SK-N-SH (cell line): ENCODE measurements at regions of chr5 and their contacts with region 1.

Region 1: GRCh38 chr5:169302491-169303118 is 1.7 kb upstream of the SLIT3 start:
- DNase-seq: peak; percentile 69
- H3K4me3 ChIP-seq: peak overlapping the region in 1 of 2 experiments; percentile 18; a peak in 1 of 4 replicates
- H3K27ac ChIP-seq: peak overlapping the region; percentile 46 to 80; a peak in 2 of 4 replicates
- H3K4me1 ChIP-seq: peaks cover 10 to 31% of the 10 kb centered on the region in 2 experiments; a peak in 2 of 4 replicates
- H3K27me3 ChIP-seq: no peaks in the 10 kb centered on the region
- CTCF ChIP-seq: peak; percentile 96
- EP300 ChIP-seq: no peak
- RAD21 ChIP-seq: peak; percentile 91

Region 2: DNA sequence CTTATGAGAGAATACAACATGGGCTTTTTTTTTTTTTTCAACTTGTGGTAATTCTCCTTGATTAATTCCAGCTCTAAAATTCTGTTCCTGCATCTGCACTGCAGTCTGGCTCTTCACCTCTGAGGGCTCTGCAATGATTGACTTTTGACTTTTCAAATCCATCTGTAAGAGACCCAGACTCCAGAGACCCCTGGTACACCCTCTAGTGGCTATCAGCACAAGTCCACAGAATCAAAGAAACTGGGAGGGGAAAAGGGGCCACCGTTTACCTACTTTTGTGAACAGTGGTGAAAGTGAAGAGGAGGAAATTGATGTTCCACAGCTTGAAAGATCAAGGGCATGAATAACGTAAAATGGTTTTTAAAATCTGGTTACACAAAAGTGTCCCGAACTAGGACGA is 153.3 kb before region 1 on chr5:
- CTCF ChIA-PET with region 1: interaction called, 20 read pairs
- POLR2A ChIA-PET with region 1: interaction called, 3 read pairs
- DNase-seq: peak; percentile 51
- H3K4me3 ChIP-seq: no peak overlapping the region; a peak in 1 of 4 replicates
- H3K27ac ChIP-seq: peak overlapping the region in 1 of 2 experiments; percentile 97; a peak in 3 of 4 replicates
- H3K4me1 ChIP-seq: peaks cover 0 to 76% of the 10 kb centered on the region in 2 experiments; a peak in 2 of 4 replicates
- H3K27me3 ChIP-seq: no peaks in the 10 kb centered on the region
- CTCF ChIP-seq: peak; percentile 57
- EP300 ChIP-seq: peak in 1 of 2 experiments; percentile 58; a peak in 1 of 4 replicates
- RAD21 ChIP-seq: peak; percentile 69

Region 3: DNA sequence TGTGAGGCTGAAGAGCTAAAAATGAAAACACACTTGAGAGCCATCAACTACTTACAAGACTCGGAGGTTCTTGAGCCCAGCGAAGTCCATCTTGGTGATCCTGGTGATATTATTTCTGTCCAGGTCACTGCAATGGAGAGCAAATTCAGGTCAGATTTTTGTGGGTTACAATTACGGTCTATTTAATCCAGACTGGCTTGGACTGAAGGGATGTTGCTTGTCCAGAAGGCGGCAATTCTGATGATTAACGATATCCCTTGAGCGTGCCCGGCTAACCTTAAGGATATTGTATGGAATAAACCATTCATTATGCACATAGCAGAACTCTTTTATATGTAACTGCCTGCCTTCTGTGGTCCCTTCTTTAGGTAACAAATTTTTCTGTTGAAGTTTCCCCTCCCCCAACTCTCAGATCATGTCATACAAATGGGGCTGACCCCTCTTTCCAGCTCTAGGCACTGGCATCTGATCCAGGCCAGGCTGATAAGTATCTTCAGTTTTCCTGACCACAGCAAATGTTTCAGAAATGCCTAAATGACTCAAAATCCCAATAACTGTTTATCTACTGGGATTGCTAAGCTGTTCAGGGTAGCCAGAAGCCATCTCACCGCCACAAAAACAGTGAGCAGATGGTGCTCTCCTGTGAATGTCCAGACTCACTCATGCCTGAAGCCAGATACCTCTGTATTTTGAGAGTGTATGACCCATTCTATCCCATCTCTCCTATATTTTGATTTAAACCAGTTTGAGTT is 51.1 kb before region 1 on chr5:
- CTCF ChIA-PET with region 1: interaction called, 11 read pairs
- POLR2A ChIA-PET with region 1: no interaction called
- DNase-seq: peak; percentile 56
- H3K4me3 ChIP-seq: no peak overlapping the region
- H3K27ac ChIP-seq: peak overlapping the region; percentile 28 to 65; a peak in 3 of 4 replicates
- H3K4me1 ChIP-seq: peaks cover 5 to 37% of the 10 kb centered on the region in 2 experiments
- H3K27me3 ChIP-seq: no peaks in the 10 kb centered on the region
- CTCF ChIP-seq: no peak
- EP300 ChIP-seq: peak; percentile 64 to 70; a peak in 3 of 4 replicates
- RAD21 ChIP-seq: peak; percentile 24; the same call in 1 of the 2 replicates

Region 4: GRCh38 chr5:169325273-169325672 is 22.7 kb after region 1 on chr5:
- CTCF ChIA-PET with region 1: interaction called, 10 read pairs
- POLR2A ChIA-PET with region 1: no interaction called
- DNase-seq: no peak
- H3K4me3 ChIP-seq: no peak overlapping the region
- H3K27ac ChIP-seq: no peak overlapping the region
- H3K4me1 ChIP-seq: no peaks in the 10 kb centered on the region; a peak in 1 of 4 replicates
- H3K27me3 ChIP-seq: no peaks in the 10 kb centered on the region
- CTCF ChIP-seq: no peak
- EP300 ChIP-seq: no peak
- RAD21 ChIP-seq: no peak